Kidney (tissue), 22 donors: ENCODE measurements at regions of chr5 and their contacts with region 1.

Region 1: DNA sequence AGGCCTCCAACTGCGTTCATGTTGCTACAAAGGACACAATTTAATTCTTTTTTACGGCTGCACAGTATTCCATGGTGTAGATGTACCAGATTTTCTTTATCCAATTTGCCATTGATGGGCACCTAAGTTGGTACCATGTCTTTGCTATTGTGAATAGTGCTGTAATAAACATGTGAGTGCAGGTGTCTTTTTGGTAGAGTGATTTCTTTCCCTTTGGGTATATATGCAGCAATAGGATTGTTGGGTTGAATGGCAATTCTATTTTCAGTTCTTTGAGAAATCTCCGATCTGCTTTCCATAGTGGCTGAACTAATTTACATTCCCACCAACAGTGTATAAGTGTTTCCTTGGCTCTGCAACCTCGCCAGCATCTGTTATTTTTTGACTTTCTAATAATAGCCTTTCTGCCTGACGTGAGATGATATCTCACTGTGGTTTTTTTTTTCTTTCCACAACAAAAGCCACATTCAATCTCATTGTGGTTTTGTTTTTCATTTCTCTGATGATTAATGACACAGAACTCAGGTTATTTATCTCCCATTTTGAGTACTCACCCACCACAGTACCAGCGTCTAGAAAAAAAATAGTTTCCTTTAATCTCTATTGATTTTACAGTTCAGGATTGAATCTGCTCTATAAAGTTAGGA is 21.9 kb downstream of the ARRDC3 start:
- DNase-seq: no peak
- H3K4me3 ChIP-seq: no peak overlapping the region
- H3K27ac ChIP-seq: no peak overlapping the region
- H3K4me1 ChIP-seq: peaks cover 0 to 9% (median 0%) of the 10 kb centered on the region in 3 donors
- H3K27me3 ChIP-seq: no peaks in the 10 kb centered on the region
- CTCF ChIP-seq: no peak

Region 2: GRCh38 chr5:90793183-90793582 is 568.0 kb before region 1 on chr5:
- intact Hi-C with region 1: no loop called
- DNase-seq: no peak
- H3K4me3 ChIP-seq: no peak overlapping the region
- H3K27ac ChIP-seq: no peak overlapping the region
- H3K4me1 ChIP-seq: no peaks in the 10 kb centered on the region
- H3K27me3 ChIP-seq: no peaks in the 10 kb centered on the region
- CTCF ChIP-seq: no peak

Region 3: GRCh38 chr5:91280362-91281269 is 80.6 kb before region 1 on chr5:
- intact Hi-C with region 1: loop called (anchors 10 kb)
- DNase-seq: peak; percentile 93 to 98 (median 96)
- H3K4me3 ChIP-seq: peak overlapping the region; percentile 74 to 90 (median 82)
- H3K27ac ChIP-seq: peak overlapping the region; percentile 74 to 90
- H3K4me1 ChIP-seq: peaks cover 0 to 6% (median 2%) of the 10 kb centered on the region in 3 donors
- H3K27me3 ChIP-seq: no peaks in the 10 kb centered on the region
- CTCF ChIP-seq: no peak